Activated T-helper 1 cell treated with anti-CD3 and anti-CD28 coated beads, Interleukin-12 subunit alpha, Interleukin-12 subunit beta, Interleukin-2, Interleukin-4 antibody, amounts not matched to agents 30 ng/mL and 10 ng/mL and 1 ng/mL, durations not matched to agents 14 hours and 24 hours and 36 hours (primary cell): ENCODE measurements at regions of chr15 and their contacts with region 1.

Region 1: GRCh38 chr15:64046347-64047153 is at the start of gene DAPK2:
- DNase-seq: peak; percentile 64
- H3K4me3 Mint-ChIP-seq: peak within 1 kb of the TSS; percentile 81
- H3K27ac Mint-ChIP-seq: peak within 1 kb of the TSS; percentile 49
- H3K4me1 Mint-ChIP-seq: peaks cover 36% of the 10 kb centered on the region
- H3K27me3 Mint-ChIP-seq: peaks cover 26% of the 10 kb centered on the region
- total RNA-seq, gene DAPK2: 8.6 and 8.7 TPM in 2 replicates

Region 2: DNA sequence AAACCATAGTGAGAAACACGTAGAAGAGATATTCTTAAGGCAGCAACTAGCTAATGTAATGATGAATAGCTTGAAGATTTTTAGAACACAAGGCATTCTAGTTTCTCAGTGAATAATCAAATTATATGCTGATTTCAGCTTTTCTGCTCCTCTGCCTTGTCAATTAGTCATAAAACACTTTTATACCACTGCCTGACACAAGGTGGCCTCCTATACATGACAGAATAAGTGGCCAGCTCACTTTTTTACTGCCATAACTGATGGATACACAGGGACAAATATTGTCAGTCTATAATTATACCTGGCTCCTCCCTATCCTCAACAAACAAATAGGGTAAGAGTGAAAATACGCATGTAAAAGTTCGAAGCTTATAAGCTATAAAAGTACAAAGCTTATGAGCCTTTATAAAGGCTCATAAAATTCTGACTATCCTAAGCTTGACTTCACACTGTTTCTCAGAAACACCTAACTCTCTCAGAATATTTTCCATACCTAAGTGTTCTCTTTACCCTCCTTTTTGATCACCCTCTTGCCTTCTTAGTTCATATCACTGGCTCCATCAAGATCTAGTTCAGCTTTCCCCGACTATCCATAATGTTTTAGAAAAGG is 294.4 kb before region 1 on chr15:
- intact Hi-C with region 1: loop called (anchors 1 kb)
- DNase-seq: peak; percentile 21
- H3K4me3 Mint-ChIP-seq: no peak overlapping the region
- H3K27ac Mint-ChIP-seq: no peak overlapping the region
- H3K4me1 Mint-ChIP-seq: peaks cover 9% of the 10 kb centered on the region
- H3K27me3 Mint-ChIP-seq: no peaks in the 10 kb centered on the region

Region 3: DNA sequence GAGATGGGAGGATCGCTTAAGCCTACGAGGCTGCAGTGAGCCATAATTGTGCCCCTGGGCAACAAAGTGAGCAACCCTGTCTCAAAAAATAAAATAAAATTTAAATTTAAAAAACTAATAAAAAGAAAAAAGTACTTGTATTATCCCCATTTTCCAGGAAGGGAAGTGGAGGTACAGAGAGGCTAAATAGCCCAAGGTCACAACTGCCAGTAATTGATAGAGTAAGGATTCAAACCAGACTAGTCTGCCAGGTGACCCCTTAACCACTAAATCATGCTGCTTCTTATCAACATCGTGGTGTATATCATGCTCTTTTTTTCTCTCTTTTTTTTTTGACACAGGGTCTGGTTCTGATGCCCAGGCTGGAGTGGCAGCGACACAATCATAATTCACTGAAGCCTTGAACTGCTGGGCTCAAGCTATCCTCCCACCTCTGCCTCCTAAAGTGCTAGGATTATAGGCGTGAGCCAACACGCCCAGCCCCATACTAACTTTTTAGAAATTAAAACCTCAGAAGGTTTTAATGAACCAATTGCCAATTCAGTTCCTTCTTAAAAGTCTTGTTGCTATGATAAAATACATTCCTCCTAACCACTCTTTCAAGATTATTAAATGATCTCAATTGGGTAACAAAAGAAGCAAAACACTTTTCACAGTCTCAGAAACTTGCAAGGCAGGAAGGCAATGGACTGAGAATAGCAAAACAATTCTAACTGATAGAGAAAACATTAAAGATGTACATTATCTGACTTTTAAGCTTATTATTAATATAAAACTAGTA is 243.3 kb before region 1 on chr15:
- intact Hi-C with region 1: no loop called
- DNase-seq: no peak
- H3K4me3 Mint-ChIP-seq: no peak overlapping the region
- H3K27ac Mint-ChIP-seq: no peak overlapping the region
- H3K4me1 Mint-ChIP-seq: peaks cover 64% of the 10 kb centered on the region
- H3K27me3 Mint-ChIP-seq: no peaks in the 10 kb centered on the region

Region 4: DNA sequence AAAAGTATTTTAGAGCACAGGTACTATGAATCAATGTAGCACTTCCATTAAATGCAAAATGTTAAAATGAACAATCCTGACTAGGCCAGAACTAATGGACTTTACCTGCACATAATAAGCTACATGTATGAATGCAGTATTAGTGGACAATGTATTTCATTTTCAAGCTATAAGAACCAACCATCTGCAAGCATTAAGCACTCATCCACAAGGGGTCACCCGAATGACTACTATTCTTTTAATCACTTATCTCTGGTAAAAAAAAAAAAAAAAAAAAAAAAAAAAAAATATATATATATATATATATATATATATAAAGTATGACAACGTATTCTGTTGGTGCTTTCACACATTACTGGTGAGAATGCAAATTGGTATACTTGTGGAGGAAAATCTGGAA is 220.0 kb before region 1 on chr15:
- intact Hi-C with region 1: loop called (anchors 1 kb)
- DNase-seq: no peak
- H3K4me3 Mint-ChIP-seq: peak overlapping the region; percentile 51
- H3K27ac Mint-ChIP-seq: no peak overlapping the region
- H3K4me1 Mint-ChIP-seq: peaks cover 63% of the 10 kb centered on the region
- H3K27me3 Mint-ChIP-seq: no peaks in the 10 kb centered on the region

Region 5: GRCh38 chr15:63945007-63945788 is 101.4 kb before region 1 on chr15:
- intact Hi-C with region 1: loop called (anchors 5 kb)
- DNase-seq: peak; percentile 51
- H3K4me3 Mint-ChIP-seq: no peak overlapping the region
- H3K27ac Mint-ChIP-seq: peak overlapping the region; percentile 52
- H3K4me1 Mint-ChIP-seq: peaks cover 47% of the 10 kb centered on the region
- H3K27me3 Mint-ChIP-seq: no peaks in the 10 kb centered on the region